Activated CD4-positive, alpha-beta memory T cell treated with anti-CD3 and anti-CD28 coated beads for 36 hours (primary cell): ENCODE measurements at regions of chr12 and their contacts with region 1.

Region 1: DNA sequence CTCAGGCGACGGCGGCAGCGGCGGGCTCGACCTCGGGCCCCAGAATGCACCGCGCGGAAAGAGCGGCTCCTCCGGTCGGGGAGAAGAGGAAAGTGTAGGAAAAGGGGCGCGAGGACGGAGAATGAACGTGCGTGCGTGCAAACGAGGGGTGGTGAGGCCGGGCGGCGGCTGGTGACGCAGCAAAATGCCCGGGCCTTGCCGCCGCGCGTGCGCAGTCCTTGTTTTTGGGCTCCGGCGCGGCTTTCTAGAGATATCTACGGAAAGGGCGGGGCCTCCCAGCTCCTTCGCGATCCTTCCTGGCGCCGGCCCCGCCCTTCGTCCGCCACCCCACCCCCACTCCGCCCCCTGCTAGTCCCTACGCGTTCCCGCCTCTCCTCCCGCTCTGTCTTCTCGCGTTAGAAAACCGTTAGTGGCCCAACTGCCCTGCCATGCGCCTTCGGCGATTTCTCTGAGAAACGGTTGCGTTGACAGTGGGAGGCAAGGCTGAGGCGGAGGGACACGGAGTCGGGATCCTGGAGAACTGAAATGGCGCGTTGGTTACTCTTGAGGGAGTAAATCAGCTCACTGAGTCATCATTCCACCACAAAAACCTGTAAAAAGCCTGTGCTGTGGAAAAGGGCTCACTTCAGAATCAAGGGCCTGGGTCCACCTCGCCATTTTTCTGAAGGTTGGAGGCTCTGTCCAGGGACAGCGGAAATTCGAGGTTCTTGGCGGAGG is at the start of gene PTGES3:
- DNase-seq: peak; percentile 99
- H3K4me3 Mint-ChIP-seq: peak within 1 kb of the TSS; percentile 100
- H3K27ac Mint-ChIP-seq: peak within 1 kb of the TSS; percentile 94
- H3K4me1 Mint-ChIP-seq: peaks cover 13% of the 10 kb centered on the region
- H3K27me3 Mint-ChIP-seq: no peaks in the 10 kb centered on the region
- total RNA-seq, gene PTGES3: 355 to 356 TPM

Region 2: GRCh38 chr12:55926738-55927587 is 761.3 kb before region 1 on chr12:
- CTCF ChIA-PET with region 1: no interaction called
- POLR2A ChIA-PET with region 1: interaction called, 4 read pairs
- intact Hi-C with region 1: loop called (anchors 10 kb)
- DNase-seq: peak; percentile 96
- H3K4me3 Mint-ChIP-seq: peak overlapping the region; percentile 96
- H3K27ac Mint-ChIP-seq: peak overlapping the region; percentile 98
- H3K4me1 Mint-ChIP-seq: peaks cover 43% of the 10 kb centered on the region
- H3K27me3 Mint-ChIP-seq: no peaks in the 10 kb centered on the region

Region 3: GRCh38 chr12:56020423-56021184 is 667.7 kb before region 1 on chr12 and contains the start of gene IKZF4:
- CTCF ChIA-PET with region 1: no interaction called
- POLR2A ChIA-PET with region 1: no interaction called
- intact Hi-C with region 1: no loop called
- DNase-seq: peak; percentile 41
- H3K4me3 Mint-ChIP-seq: peak within 1 kb of the TSS; percentile 83
- H3K27ac Mint-ChIP-seq: peak within 1 kb of the TSS; percentile 80
- H3K4me1 Mint-ChIP-seq: peaks cover 32% of the 10 kb centered on the region
- H3K27me3 Mint-ChIP-seq: no peaks in the 10 kb centered on the region
- total RNA-seq, gene IKZF4: 14.4 to 15.1 TPM

Region 4: GRCh38 chr12:56178347-56178746 is 509.9 kb before region 1 on chr12:
- CTCF ChIA-PET with region 1: no interaction called
- POLR2A ChIA-PET with region 1: no interaction called
- intact Hi-C with region 1: no loop called
- DNase-seq: no peak
- H3K4me3 Mint-ChIP-seq: no peak overlapping the region
- H3K27ac Mint-ChIP-seq: no peak overlapping the region
- H3K4me1 Mint-ChIP-seq: no peaks in the 10 kb centered on the region
- H3K27me3 Mint-ChIP-seq: no peaks in the 10 kb centered on the region

Region 5: DNA sequence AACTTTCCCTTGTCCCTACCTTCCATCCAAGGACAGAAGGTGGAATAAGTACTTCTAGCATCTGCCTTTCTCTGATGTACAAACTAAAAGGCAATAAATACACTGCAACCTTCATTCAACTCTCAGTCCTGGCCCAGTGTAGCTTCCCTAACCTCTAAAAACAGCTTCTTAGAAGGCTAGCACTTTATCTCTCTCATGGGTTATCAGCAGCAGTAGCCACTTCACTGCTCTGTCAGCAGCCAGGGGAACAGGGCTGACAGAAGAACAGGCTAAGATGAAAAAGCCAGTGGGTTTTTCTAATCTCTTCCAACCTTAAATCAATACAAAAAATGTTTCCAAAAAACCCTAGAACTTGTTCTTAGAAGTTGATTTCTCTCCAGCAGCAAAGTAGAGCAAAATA is 71.4 kb before region 1 on chr12:
- CTCF ChIA-PET with region 1: no interaction called
- POLR2A ChIA-PET with region 1: no interaction called
- intact Hi-C with region 1: no loop called
- DNase-seq: no peak
- H3K4me3 Mint-ChIP-seq: no peak overlapping the region
- H3K27ac Mint-ChIP-seq: no peak overlapping the region
- H3K4me1 Mint-ChIP-seq: peaks cover 15% of the 10 kb centered on the region
- H3K27me3 Mint-ChIP-seq: no peaks in the 10 kb centered on the region

Region 6: DNA sequence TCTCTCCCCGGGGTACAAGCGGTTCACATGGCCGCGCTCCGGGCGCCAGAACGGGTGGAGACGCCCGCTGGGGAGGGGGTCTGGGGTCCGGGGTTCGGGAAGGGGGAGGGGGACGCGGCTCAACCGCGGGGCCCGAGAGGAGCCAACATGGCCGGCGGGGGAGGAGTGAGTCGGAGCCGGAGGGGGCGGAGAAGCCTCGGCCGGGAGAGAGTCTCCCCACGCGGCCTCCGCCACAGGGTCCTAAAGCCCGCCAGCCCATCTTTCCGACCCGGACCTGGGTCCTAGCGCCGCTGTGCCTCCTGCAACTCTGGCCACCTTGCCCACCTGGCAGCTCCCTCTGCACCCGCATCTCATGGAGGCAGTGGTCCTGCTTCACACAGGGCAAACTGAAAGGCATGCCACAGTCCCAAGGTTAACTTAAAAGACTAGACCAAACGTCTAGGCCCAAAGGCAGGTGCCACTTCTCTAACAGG is 58.1 kb before region 1 on chr12 and contains the start of gene BAZ2A:
- CTCF ChIA-PET with region 1: interaction called, 19 read pairs
- POLR2A ChIA-PET with region 1: interaction called, 59 read pairs
- intact Hi-C with region 1: no loop called
- DNase-seq: peak; percentile 92
- H3K4me3 Mint-ChIP-seq: peak within 1 kb of the TSS; percentile 93
- H3K27ac Mint-ChIP-seq: peak within 1 kb of the TSS; percentile 93
- H3K4me1 Mint-ChIP-seq: peaks cover 71% of the 10 kb centered on the region
- H3K27me3 Mint-ChIP-seq: no peaks in the 10 kb centered on the region
- total RNA-seq, gene BAZ2A: 90.7 to 111 TPM

Region 7: GRCh38 chr12:56668197-56668457 is 20.2 kb before region 1 on chr12:
- CTCF ChIA-PET with region 1: no interaction called
- POLR2A ChIA-PET with region 1: interaction called, 6 read pairs
- intact Hi-C with region 1: loop called (anchors 2 kb)
- DNase-seq: no peak
- H3K4me3 Mint-ChIP-seq: no peak overlapping the region
- H3K27ac Mint-ChIP-seq: peak overlapping the region; percentile 78
- H3K4me1 Mint-ChIP-seq: peaks cover 46% of the 10 kb centered on the region
- H3K27me3 Mint-ChIP-seq: no peaks in the 10 kb centered on the region

Region 8: DNA sequence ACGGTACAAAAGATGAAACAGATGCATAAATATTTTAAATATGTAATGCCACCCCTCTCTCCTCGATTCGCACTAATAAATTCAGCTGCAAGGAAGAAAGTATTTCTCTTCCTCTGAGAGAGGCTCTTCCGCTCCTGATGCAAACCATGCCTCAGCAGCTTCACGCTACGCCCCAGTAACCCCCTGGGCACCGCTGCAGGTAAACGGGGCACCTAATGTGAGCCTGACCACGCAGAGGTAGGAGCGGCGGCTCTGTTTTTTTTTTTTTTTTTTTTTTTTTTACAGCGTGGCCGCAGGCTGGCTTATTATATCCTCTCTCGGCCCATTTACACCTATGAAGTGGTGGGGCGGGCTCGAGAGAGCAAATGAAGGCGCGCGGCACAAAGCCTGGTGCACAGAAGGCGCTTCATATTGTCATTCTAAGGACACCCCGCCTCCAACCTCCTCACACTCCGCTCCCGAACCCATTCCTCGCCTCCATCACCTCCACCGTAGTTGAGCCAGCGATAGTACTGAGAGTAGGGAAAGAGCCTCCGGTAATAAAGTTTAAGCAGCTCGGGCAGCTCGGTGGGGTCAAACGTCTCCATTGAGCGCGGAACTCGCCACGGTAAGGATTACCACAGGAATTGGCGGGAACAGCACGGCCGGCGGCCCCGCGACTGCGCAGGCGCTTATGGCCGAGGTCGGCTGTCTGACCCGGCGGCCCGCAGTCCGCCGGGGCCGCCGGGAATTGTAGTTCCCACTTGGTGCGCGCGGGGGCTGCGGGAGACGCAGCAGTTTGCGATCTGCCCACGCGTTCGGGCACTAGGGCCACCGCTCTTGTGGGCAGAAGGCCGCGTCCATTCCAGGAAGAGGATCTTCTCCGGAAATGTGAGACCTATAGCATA is 63.7 kb after region 1 on chr12 and contains the start of gene PRIM1:
- CTCF ChIA-PET with region 1: no interaction called
- POLR2A ChIA-PET with region 1: interaction called, 6 read pairs
- intact Hi-C with region 1: loop called (anchors 2 kb)
- DNase-seq: peak; percentile 94
- H3K4me3 Mint-ChIP-seq: peak within 1 kb of the TSS; percentile 99
- H3K27ac Mint-ChIP-seq: peak within 1 kb of the TSS; percentile 99
- H3K4me1 Mint-ChIP-seq: peaks cover 32% of the 10 kb centered on the region
- H3K27me3 Mint-ChIP-seq: no peaks in the 10 kb centered on the region
- total RNA-seq, gene PRIM1: 74.5 to 75.3 TPM

Region 9: DNA sequence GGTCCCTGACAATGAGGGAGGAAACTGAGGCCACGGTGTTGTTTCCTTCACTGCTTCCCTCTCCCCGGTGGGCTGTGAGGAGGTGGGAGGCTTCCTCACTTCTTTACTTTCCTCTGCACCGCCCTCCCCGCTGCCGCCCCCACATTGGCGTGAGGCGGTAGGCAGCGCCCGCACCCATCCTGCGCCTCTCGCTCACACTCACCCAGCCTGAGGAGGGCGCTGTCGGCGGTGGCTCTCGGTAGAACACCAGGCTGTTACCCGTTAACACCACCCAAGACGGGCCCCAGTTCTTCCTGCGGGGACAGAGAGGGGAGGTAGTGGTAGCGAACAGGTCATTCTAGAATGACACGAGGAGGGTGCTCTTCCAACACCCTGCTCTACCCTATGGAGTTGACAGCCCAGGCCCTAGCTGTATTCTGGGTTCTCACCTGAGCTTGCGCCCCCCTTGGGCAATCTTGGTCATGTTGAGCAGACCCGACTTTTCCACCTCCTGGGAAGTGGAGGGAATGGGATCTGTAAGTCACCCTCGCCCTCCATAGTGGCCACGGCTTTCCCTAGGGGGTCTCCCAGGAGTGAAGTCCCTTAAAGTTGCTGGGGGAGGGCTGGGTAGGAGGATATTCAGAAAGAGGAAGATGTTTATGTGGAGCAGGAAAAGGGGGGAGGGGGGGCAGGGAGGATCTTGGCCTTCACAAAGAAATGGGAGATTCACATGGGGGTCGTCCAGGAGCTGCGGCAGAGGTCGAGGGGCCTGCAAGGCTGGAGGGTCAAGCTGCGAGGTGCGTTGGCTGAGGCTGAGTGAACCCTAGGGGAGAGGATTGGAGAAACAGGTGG is 788.1 kb after region 1 on chr12:
- CTCF ChIA-PET with region 1: no interaction called
- POLR2A ChIA-PET with region 1: no interaction called
- intact Hi-C with region 1: loop called (anchors 10 kb)
- DNase-seq: peak; percentile 94
- H3K4me3 Mint-ChIP-seq: peak overlapping the region; percentile 87
- H3K27ac Mint-ChIP-seq: peak overlapping the region; percentile 99
- H3K4me1 Mint-ChIP-seq: peaks cover 60% of the 10 kb centered on the region
- H3K27me3 Mint-ChIP-seq: no peaks in the 10 kb centered on the region

Region 10: GRCh38 chr12:57803319-57803893 is 1115.1 kb after region 1 on chr12:
- CTCF ChIA-PET with region 1: no interaction called
- POLR2A ChIA-PET with region 1: no interaction called
- intact Hi-C with region 1: no loop called
- DNase-seq: peak; percentile 43
- H3K4me3 Mint-ChIP-seq: no peak overlapping the region
- H3K27ac Mint-ChIP-seq: no peak overlapping the region
- H3K4me1 Mint-ChIP-seq: no peaks in the 10 kb centered on the region
- H3K27me3 Mint-ChIP-seq: no peaks in the 10 kb centered on the region